Brain microvascular endothelial cell (primary cell): ENCODE measurements at regions of chr3 and their contacts with region 1.

Region 1: DNA sequence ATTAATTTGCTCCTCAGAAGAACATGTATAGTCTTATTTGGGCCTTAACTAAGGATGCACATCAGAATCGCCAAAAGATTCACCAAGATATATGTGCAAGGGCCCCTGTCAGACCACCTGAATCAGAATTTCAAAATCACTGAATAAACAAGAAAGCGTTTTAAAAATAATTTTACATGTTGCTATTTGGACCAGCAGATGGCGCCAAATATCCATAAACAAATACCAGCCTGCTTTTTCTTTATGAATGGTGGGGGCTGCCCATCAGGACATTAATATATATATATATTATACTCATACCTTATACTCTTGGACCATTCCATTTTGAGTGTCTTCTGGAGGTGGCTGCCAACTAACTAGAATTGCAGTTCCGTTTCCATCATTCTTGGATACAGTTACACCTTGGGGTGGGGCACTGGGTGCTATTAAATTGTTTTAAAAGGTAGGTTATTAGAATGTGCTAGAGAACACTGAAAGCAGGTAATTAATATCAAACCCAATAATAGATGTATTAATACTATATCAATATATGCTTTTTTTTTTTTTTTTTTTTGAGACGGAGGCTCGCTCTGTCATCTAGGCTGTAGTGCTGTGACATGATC is 1108.3 kb downstream of the ROBO1 start:
- DNase-seq: peak; percentile 48
- H3K4me3 ChIP-seq: no peak overlapping the region
- H3K27ac ChIP-seq: no peak overlapping the region
- H3K27me3 ChIP-seq: no peaks in the 10 kb centered on the region
- CTCF ChIP-seq: peak; percentile 42

Region 2: DNA sequence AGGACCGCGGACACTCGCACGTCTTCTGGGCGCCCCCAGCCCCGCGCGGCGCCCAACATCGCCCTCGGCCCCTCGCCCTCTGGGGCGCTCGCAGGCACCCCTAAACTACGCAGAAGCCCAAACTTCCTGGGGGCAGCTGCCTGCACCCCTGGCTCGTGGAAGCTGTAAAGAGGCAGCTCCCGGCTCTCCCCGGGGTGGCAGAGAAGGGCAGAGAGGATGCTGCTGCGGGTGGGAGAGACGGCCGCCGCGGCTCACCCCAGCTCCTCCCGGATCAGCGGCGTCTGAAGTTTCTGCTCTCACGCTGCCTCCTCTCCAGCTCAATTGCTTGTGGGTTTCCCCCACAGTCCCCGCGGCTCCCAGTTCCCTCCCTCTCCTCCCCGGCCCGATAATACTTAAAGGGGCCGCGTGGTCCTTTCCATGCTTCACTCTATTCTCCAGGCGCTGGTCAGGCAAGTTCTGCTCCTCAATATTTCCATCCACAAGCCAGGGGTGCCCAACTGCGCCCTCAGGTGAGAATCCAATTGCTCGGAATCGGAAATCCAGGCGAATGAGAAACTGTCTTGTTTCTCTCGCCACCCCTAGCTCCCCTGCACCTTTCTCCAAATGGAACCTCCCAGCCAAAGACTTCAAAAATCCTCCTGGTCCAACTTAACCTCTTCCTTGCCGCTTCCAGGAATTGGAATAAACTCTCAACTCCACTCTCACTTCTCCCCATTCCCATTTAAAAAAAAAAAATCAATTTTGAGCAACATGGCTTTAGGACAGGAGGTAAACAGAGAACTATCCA is 359.8 kb after region 1 on chr3:
- in situ Hi-C with region 1: loop called (anchors 25 kb)
- DNase-seq: peak; percentile 90
- H3K4me3 ChIP-seq: peak overlapping the region; percentile 91
- H3K27ac ChIP-seq: peak overlapping the region; percentile 96
- H3K27me3 ChIP-seq: no peaks in the 10 kb centered on the region
- CTCF ChIP-seq: no peak

Region 3: DNA sequence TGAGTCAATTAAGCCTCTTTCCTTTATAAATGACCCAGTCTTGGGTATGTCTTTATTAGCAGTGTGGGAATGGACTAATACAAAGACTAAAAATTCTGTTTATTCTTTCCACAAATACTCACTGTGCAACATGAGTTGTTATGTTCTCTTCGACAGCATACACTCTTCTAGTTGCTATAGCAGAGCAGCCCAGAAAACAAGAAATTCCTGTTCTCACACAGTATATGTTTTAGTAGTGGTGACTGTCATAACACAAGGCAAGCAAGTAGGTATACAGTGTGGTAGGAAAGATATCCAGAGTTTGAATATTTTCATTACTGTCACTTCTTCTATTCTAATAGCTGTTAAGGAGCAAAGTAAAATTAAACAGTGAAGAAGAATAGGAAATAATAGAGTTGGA is 655.1 kb after region 1 on chr3:
- in situ Hi-C with region 1: no loop called
- DNase-seq: no peak
- H3K4me3 ChIP-seq: no peak overlapping the region
- H3K27ac ChIP-seq: no peak overlapping the region
- H3K27me3 ChIP-seq: no peaks in the 10 kb centered on the region
- CTCF ChIP-seq: no peak